Right cardiac atrium (tissue), 5 donors: ENCODE measurements at regions of chr20 and their contacts with region 1.

Region 1: DNA sequence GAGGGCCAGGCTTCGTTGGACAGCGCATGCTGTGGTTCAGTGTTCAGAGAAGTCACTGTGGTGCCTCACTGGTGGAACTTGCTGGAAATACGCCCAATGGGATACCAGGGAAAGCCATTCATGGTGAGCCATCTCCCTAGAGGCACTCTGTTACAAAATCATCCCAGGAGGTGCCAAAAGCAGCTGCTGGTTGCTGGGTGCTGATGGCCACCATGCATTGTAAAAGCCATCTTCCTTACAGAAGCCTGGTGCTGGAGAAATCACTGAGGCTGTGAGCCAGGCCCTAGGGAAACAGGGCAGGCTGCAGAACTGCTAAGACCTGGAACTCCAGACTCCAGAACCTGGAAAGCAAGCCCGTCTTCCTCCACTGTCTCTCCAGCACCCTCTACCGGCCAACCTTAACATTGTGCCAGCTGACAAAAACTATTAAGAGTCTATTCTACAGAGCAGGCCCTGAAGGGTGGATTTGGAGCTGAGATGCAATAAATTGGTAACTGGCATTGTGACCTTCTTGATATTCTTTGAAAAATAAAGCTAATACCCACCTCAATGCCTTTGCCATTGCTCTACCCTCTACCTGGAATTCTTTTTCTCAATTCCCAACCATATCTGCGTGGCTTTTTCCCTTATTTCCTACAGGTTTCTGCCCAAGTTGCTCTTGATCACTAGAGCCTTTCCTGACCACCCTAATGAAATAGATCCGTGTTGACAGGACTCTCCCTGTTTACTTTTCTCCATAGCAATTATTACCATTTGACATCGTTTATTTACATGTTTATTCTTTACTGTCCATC is 18.5 kb downstream of the SNRPB start:
- DNase-seq: peak in 2 of 3 donors; percentile 62 to 77
- ATAC-seq: peak; percentile 54 to 70
- H3K4me3 ChIP-seq: no peak overlapping the region
- H3K27ac ChIP-seq: no peak overlapping the region
- H3K4me1 ChIP-seq: no peaks in the 10 kb centered on the region
- H3K27me3 ChIP-seq: no peaks in the 10 kb centered on the region

Region 2: DNA sequence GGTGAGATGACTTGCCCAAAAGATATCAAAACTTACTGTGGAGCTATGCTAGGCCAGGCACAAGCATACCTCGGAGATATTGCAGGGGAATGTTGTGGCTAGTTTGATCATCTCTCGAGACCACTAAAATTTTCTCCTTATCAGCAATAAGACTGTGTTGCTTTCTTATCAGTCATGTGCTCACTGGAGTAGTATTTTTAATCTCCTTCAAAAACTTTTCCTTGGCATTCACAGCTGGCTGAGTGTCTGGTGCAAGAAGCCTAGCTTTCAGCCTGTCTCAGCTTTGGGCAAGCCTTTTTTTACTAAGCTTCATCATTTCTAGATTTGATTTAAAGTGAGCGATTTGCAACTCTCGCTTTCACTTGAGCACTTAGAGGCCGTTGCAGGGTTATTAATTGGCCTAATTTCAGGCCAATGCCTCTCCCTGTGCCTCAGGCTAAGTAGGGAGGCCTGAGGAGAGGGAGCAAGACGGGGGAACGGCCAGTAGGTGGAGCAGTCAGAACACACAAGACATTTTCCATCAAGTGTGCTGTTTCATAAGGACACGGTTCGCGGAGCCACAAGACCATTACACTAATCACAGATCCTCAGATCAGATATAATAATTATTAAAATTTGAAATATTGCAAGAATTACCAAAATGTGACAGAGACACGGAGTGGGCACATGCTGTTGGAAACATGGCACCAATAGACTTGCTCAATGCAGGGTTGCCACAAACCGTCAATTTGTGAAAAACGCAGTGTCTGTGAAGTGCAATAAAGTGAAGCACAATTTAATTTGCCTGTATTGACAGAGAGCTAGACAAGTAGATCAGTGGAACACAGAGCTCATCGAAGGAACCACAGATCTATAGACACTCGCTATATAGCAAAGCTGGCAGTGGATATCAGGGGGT is 687.8 kb before region 1 on chr20:
- intact Hi-C with region 1: loop called in 1 of 4 experiments (anchors 10 kb)
- DNase-seq: peak; percentile 79 to 92 (median 87)
- ATAC-seq: peak; percentile 93 to 95
- H3K4me3 ChIP-seq: no peak overlapping the region
- H3K27ac ChIP-seq: no peak overlapping the region
- H3K4me1 ChIP-seq: no peaks in the 10 kb centered on the region
- H3K27me3 ChIP-seq: no peaks in the 10 kb centered on the region

Region 3: GRCh38 chr20:1965520-1966351 is 486.4 kb before region 1 on chr20:
- intact Hi-C with region 1: loop called in 2 of 4 experiments (anchors 5 to 10 kb)
- DNase-seq: peak; percentile 75 to 93 (median 88)
- ATAC-seq: peak; percentile 78 to 88
- H3K4me3 ChIP-seq: no peak overlapping the region
- H3K27ac ChIP-seq: no peak overlapping the region
- H3K4me1 ChIP-seq: no peaks in the 10 kb centered on the region
- H3K27me3 ChIP-seq: no peaks in the 10 kb centered on the region

Region 4: DNA sequence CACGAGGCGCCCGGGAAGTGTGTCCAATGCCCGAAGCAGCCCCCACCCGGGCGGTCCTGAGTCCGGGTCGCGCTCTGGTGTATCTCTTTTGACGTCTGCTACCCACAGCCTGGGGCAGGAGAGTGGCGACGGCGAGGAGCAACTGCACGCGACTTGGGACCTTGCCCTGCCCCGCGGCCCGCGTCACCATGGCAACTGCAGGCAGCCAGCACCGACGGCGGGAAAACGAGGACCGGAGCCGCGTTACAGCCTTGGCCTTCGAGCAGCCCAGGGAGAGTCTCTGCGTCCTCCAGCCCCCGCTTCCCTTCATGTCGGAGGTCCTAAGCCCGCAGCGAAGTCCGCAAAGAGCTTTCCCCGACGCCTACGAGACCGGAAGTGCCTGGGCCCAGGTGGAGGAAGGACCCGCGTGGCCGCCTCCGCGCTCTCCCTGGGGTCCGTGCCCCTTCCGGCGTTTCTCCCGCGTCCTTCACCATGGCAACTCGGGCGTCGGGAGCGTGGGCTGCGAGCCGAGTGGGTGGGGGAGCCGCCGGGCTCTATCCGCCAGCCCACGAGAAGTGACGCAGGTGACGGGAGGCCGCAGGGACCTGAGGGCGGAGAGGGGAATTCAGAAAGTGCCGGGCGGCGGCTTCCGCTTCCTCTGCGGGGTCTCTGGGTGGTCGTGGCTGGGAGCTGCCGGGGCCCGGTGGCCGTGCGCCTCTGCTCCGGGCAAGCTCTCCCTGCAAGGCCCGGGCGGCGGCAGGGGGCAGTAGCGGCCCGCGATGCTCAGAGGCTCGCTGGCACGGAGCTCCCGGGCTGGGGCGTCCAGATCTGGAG is 245.0 kb before region 1 on chr20:
- intact Hi-C with region 1: loop called in 3 of 4 experiments (anchors 5 to 10 kb)
- DNase-seq: peak; percentile 79 to 91 (median 90)
- ATAC-seq: peak; percentile 91 to 94
- H3K4me3 ChIP-seq: peak overlapping the region; percentile 42
- H3K27ac ChIP-seq: no peak overlapping the region
- H3K4me1 ChIP-seq: peaks cover 2% of the 10 kb centered on the region
- H3K27me3 ChIP-seq: no peaks in the 10 kb centered on the region

Region 5: DNA sequence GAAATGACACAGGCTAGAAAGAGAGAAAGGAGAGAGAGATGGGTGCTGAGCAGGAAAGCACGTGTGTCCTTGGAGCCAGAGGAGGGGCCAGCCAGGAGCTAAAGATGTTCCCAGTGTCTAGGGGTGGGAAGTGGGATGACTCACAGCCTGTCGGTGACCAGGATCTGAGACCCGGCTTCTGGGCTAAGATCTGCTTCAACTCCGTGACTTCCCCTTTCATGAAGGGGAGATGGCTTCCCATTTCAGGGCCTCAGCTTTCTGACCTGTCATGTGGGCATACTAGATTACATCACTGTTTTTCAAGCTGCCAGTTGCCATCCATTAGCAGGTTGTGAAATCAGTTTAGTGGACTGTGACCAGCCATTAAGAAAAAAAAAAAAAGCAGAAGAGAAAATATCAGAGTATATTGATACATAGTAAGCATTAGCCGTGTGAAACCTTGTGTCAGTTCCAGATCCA is 150.9 kb before region 1 on chr20:
- intact Hi-C with region 1: no loop called
- DNase-seq: peak; percentile 49 to 66 (median 57)
- ATAC-seq: peak; percentile 68 to 70
- H3K4me3 ChIP-seq: no peak overlapping the region
- H3K27ac ChIP-seq: no peak overlapping the region
- H3K4me1 ChIP-seq: no peaks in the 10 kb centered on the region
- H3K27me3 ChIP-seq: no peaks in the 10 kb centered on the region